ENCODE measurements at regions of chr6 and their contacts with region 1.

Region 1: GRCh38 chr6:33172688-33173534 is 19.4 kb downstream of the COL11A2 start:
- DNase-seq: no peak
- H3K4me3 ChIP-seq: no peak overlapping the region
- H3K27me3 ChIP-seq: peaks cover 3% of the 10 kb centered on the region
- CTCF ChIP-seq: peak; percentile 76

Region 2: DNA sequence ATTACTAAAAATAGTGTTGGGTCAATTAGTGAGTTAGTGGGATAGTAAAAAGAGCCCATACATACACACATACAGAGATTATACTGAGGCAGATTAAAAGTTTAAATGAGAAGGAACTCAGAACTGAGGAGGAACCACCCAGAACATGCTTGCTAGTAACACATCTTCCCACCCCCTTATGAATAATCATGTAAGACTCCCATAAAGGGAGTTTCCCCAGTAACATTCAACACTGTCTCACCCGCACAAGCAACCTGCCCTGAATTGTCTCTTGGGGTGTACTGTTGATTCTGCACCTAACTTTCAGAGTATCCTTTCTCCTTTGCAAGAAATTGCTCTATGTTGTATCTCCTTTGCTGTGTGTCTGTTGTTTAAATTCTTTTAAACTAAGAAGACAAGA is 398.5 kb before region 1 on chr6:
- CTCF ChIA-PET with region 1: no interaction called
- POLR2A ChIA-PET with region 1: no interaction called
- DNase-seq: no peak
- H3K4me3 ChIP-seq: no peak overlapping the region
- H3K27me3 ChIP-seq: no peaks in the 10 kb centered on the region; the same call in 1 of the 2 replicates
- CTCF ChIP-seq: no peak

Region 3: GRCh38 chr6:33014841-33015634 is 157.9 kb before region 1 on chr6:
- CTCF ChIA-PET with region 1: interaction called, 33 read pairs
- POLR2A ChIA-PET with region 1: no interaction called
- DNase-seq: peak; percentile 43
- H3K4me3 ChIP-seq: no peak overlapping the region
- H3K27me3 ChIP-seq: peaks cover 26% of the 10 kb centered on the region
- CTCF ChIP-seq: peak; percentile 72

Region 4: GRCh38 chr6:33073431-33073871 is 99.5 kb before region 1 on chr6 and contains the start of gene HLA-DPA1:
- CTCF ChIA-PET with region 1: no interaction called
- POLR2A ChIA-PET with region 1: no interaction called
- DNase-seq: no peak
- H3K4me3 ChIP-seq: no peak within 1 kb of the TSS
- H3K27me3 ChIP-seq: peaks cover 5% of the 10 kb centered on the region
- CTCF ChIP-seq: no peak
- polyA plus RNA-seq, gene HLA-DPA1: 11.2 and 12.1 TPM in 2 replicates

Region 5: GRCh38 chr6:33118525-33119123 is 54.3 kb before region 1 on chr6:
- CTCF ChIA-PET with region 1: interaction called, 27 read pairs
- POLR2A ChIA-PET with region 1: no interaction called
- DNase-seq: no peak
- H3K4me3 ChIP-seq: no peak overlapping the region
- H3K27me3 ChIP-seq: peaks cover 32% of the 10 kb centered on the region
- CTCF ChIP-seq: peak; percentile 65

Region 6: GRCh38 chr6:33161354-33162331 is 11.3 kb before region 1 on chr6:
- CTCF ChIA-PET with region 1: interaction called, 39 read pairs
- POLR2A ChIA-PET with region 1: no interaction called
- DNase-seq: no peak
- H3K4me3 ChIP-seq: peak overlapping the region; percentile 39
- H3K27me3 ChIP-seq: peaks cover 3% of the 10 kb centered on the region
- CTCF ChIP-seq: peak; percentile 98

Region 7: GRCh38 chr6:33329058-33329457 is 156.1 kb after region 1 on chr6:
- CTCF ChIA-PET with region 1: no interaction called
- POLR2A ChIA-PET with region 1: no interaction called
- DNase-seq: no peak
- H3K4me3 ChIP-seq: no peak overlapping the region
- H3K27me3 ChIP-seq: peaks cover 3% of the 10 kb centered on the region; the same call in 1 of the 2 replicates
- CTCF ChIP-seq: no peak